Activated CD4-positive, alpha-beta memory T cell treated with anti-CD3 and anti-CD28 coated beads for 36 hours (primary cell): ENCODE measurements at regions of chr4 and their contacts with region 1.

Region 1: GRCh38 chr4:142824368-142824767 is 21.7 kb downstream of the INPP4B start:
- DNase-seq: no peak
- H3K4me3 Mint-ChIP-seq: no peak overlapping the region
- H3K27ac Mint-ChIP-seq: no peak overlapping the region
- H3K4me1 Mint-ChIP-seq: peaks cover 15% of the 10 kb centered on the region
- H3K27me3 Mint-ChIP-seq: peaks cover 14% of the 10 kb centered on the region

Region 2: DNA sequence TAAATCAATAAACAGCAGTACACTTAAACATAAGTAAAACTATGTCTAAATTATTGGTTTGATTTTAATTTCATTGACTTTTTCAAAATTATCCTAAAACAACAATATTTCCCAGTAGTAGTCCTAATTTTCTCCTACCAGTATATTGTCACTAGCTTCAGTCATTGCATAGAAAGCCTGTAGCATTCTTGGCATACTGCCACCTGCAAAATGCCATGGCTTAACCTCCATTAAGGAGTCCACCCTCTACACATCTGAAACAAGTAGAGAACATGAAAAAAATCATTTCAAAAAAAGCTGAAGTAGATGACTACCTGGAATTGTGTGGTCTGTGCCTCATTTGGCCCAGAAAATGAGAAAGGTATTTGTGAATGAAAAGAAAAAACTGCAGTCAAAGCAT is 326.8 kb before region 1 on chr4:
- CTCF ChIA-PET with region 1: no interaction called
- POLR2A ChIA-PET with region 1: no interaction called
- intact Hi-C with region 1: no loop called
- DNase-seq: no peak
- H3K4me3 Mint-ChIP-seq: no peak overlapping the region
- H3K27ac Mint-ChIP-seq: no peak overlapping the region
- H3K4me1 Mint-ChIP-seq: peaks cover 4% of the 10 kb centered on the region
- H3K27me3 Mint-ChIP-seq: no peaks in the 10 kb centered on the region

Region 3: DNA sequence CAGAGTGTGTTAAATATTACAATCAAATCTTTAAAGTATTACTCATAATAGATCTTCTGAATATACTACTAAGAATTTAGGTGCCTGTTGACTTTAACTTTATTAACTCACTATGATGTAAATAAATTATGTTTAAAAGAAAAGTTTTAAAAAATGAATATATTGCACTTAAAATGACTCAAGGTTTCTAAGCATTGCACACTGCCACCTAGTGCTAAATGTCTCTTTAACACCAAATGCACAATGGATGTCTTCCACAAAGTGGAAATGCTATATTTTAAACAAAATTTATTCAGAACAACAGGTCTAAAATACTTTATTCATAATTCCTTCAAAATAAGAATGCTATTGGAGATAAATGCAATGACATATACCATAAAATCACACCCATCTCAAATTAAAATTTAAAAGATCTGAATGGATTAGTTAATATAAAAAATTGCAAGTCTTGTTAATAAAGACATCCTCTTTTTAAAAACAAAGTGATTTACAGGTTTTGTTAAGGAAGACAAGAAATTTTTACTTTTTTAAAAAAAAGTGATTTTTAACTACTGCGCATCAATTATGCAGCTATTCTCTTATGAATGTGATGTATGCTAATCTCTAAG is 16.3 kb after region 1 on chr4:
- CTCF ChIA-PET with region 1: no interaction called
- POLR2A ChIA-PET with region 1: interaction called, 3 read pairs
- intact Hi-C with region 1: loop called (anchors 1 kb)
- DNase-seq: no peak
- H3K4me3 Mint-ChIP-seq: no peak overlapping the region
- H3K27ac Mint-ChIP-seq: no peak overlapping the region
- H3K4me1 Mint-ChIP-seq: peaks cover 21% of the 10 kb centered on the region
- H3K27me3 Mint-ChIP-seq: peaks cover 2% of the 10 kb centered on the region